Left ventricle myocardium superior (tissue), 1 donor: ENCODE measurements at regions of chr5 and their contacts with region 1.

Region 1: DNA sequence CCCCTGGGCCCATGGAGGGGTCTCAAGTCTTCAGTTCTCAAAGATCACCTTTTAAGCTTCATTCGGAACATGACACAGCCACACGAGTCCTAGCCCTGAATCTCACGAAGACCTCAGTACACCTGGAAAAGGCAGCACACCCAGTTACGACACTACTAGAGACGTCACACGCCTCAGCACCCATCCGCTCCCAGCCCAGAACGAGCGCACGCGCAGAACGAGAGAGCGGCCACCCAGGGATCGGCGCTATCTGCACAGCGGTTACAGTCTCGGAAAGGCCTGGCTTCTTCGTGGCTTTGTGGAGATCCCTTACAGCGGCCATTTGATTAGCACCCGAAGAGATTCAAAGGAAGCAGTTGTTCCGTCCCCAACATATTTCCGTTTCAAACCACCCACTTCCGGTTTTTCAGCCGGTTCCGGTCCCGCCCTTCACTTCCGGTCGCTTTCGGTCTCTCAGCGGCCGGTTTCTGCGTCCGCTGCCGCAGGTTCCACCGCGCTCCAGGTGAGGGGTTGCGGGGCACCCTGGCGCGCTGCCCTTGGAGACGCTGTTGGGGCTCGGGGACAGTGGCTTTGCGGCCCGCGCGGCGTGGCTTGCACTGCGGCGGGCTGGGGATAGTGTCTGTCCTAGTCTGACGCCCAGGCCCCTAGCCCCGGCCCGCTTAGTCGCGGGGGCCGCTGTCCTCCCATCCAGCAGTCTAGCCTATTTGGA is at the start of gene UBLCP1:
- DNase-seq: peak; percentile 84
- ATAC-seq: peak; percentile 96
- total RNA-seq, gene UBLCP1: 13.8 TPM

Region 2: DNA sequence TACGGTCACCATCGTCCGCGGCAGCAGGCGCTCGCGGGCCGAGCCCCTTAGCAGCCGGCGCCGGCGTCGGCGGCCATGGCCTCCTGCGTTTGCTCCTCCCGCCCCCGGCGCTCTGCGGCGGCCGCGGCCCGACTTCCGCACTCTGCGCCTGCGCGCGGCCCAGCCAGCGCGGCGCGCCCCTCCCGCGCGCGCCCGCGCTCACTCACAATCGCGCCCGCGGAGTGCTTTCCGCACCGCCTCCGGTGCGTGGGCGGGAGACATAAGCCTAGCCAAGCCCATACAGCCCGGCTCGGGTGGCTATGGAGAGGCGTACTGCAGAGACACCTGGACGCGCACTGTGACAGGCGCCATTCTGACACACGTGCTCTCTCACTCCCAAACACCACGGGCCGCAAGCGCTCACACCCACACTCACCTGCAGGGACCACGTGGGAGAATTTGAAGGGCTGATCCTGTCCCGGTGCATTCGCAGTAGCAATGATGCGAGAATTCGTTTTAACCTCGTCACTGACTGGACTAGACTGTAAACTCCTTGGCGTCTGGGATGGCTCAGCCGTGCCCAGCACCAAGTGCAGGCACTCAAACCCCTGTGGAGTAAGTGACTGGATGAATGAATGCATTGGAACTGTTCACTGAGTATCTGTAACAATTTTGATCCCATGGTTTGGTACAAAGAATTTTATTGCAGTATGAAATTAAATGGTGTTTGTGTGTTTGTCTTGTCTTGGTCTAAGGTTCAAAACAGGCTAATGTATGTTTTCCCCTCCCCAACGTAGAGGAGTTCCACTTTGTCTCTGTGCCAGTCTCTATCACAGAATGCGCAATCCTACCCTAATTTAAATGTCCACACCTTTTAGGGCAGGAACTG is 53.3 kb before region 1 on chr5 and contains the start of gene RNF145:
- intact Hi-C with region 1: loop called (anchors 5 kb)
- DNase-seq: peak; percentile 95
- ATAC-seq: peak; percentile 79
- total RNA-seq, gene RNF145: 23.3 TPM

Region 3: DNA sequence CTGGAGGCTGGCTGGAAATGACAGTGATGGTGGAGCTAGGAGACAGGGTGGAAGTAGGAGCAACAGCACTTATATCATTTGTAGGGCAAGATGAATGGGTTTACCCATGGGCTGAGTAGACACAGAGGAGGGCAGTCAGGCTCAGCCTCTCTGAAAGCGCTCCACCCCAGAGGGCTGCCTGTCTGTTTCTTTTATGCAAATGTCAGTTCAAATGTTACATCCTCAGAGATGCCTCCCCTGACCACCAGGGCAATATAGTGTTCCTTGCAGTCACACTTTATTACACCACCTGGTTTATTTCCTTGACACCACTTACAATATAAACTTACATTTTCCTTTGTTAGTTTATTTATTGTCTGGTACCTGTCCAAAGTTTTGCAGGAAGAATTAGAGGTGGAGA is 226.8 kb after region 1 on chr5:
- intact Hi-C with region 1: no loop called
- DNase-seq: no peak
- ATAC-seq: no peak

Region 4: DNA sequence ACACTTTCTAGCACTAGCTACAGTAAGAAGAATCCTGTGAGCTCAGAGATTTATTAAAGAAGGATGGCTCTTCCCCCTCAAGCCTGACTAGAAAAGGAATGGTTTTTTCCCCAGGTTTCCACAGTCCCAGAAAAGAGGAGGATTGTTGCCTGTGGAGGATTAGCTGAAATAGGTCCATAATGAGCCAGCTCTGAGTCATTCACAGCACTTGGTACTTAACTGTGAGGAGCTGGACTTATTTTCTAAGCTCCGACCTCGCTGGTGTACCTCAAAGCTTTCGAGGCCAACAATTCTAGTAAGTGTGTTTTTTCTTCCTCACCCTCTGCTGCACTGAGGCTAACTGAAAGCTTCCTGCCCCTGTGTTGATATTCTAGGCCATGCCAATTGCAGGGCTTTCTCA is 289.7 kb after region 1 on chr5:
- intact Hi-C with region 1: no loop called
- DNase-seq: no peak
- ATAC-seq: no peak